ENCODE measurements at regions of chr20 and their contacts with region 1.

Region 1: DNA sequence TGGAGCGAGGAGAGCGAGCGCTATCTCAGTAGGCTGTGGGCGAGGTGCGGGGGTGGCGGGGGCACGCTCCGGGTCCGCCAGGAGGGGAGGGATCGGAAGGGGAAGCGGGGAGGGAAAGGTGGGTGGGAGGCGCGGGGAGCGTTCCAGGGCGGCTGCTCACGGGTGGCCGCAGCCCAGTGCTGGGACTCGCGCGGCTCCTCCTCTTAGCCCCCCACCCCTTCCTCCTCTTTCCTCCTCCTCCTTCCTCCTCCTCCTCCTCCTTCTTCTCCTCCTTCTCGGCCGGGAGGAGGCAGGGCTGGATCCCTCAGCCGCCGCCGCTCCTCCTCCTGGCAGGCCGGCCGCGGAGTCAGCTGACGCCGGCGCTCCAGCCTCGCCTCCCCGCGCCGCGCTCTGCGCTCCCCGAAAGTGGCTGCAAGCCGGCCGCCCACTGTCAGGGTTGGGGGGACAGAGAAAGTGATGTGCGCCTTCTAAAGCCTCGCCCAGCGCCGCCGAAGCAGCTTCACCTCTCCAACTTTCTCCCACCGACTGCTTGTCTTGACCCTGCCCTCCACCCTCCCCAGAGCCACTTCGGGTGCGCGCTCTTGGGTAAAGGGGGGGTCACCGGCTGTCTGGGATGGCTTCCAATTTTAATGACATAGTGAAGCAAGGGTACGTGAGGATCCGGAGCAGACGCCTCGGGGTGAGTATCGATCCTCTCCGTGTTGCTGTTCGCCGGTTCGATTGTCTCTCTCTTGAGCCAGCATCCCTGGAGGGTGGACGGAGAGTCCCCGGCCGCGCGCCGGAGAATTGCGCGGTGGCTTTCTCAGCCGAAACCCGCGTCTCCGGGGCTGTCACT is at the start of gene DOK5:
- DNase-seq: peak in 1 of 2 donors; percentile 74
- H3K4me3 ChIP-seq: peak within 1 kb of the TSS; percentile 48 to 85
- H3K27ac ChIP-seq: peak within 1 kb of the TSS; percentile 70 to 71
- H3K4me1 ChIP-seq: peaks cover 0 to 3% of the 10 kb centered on the region in 2 donors
- H3K27me3 ChIP-seq: no peaks in the 10 kb centered on the region
- CTCF ChIP-seq: no peak
- total RNA-seq, gene DOK5: not detected

Region 2: GRCh38 chr20:54207743-54208547 is 267.6 kb before region 1 on chr20 and contains the start of gene PFDN4:
- intact Hi-C with region 1: loop called (anchors 5 kb)
- DNase-seq: peak in 1 of 2 donors; percentile 87
- H3K4me3 ChIP-seq: peak within 1 kb of the TSS; percentile 88 to 94
- H3K27ac ChIP-seq: peak within 1 kb of the TSS; percentile 96 to 98
- H3K4me1 ChIP-seq: peaks cover 0 to 16% of the 10 kb centered on the region in 2 donors
- H3K27me3 ChIP-seq: no peaks in the 10 kb centered on the region
- CTCF ChIP-seq: peak; percentile 58 to 83 (median 82)
- total RNA-seq, gene PFDN4: 68.9 TPM

Region 3: DNA sequence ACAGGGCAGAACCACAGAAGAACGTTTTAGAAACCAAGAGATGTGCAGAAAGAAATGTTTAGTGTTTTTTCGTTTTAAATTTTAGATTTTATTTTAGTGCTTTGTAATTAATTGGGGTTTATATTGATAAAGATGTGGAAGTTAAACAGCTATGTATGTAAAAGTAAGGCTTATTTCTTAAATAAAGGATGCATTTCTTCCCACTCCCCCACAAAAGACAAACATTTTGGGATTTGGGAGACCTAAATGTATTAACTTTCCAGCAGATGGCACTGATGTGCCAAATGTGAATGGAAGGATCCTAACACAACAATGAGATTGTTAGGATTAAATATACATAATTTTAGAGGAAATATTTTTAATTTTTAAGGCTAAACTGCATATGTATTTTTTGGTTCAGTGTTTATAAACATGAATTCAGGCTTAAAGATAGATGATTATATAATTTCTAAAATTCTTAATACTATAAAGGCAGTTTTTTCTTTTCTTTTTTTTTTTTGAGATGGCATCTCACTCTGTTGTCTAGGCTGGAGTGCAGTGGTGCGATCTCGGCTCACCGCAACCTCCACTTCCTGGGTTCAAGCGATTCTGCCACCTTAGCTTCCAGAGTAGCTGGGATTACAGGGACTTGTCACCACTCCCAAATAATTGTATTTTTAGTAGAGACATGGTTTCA is 255.7 kb before region 1 on chr20:
- intact Hi-C with region 1: loop called (anchors 5 kb)
- DNase-seq: no peak
- H3K4me3 ChIP-seq: no peak overlapping the region
- H3K27ac ChIP-seq: no peak overlapping the region
- H3K4me1 ChIP-seq: peaks cover 0 to 21% of the 10 kb centered on the region in 2 donors
- H3K27me3 ChIP-seq: no peaks in the 10 kb centered on the region
- CTCF ChIP-seq: peak; percentile 18 to 63 (median 53)

Region 4: GRCh38 chr20:54345301-54345724 is 130.2 kb before region 1 on chr20:
- intact Hi-C with region 1: loop called (anchors 2 kb)
- DNase-seq: no peak
- H3K4me3 ChIP-seq: no peak overlapping the region
- H3K27ac ChIP-seq: peak overlapping the region; percentile 5 to 54
- H3K4me1 ChIP-seq: peaks cover 0 to 15% of the 10 kb centered on the region in 2 donors
- H3K27me3 ChIP-seq: no peaks in the 10 kb centered on the region
- CTCF ChIP-seq: no peak

Region 5: GRCh38 chr20:54549658-54550326 is 74.2 kb after region 1 on chr20:
- intact Hi-C with region 1: loop called (anchors 5 kb)
- DNase-seq: no peak
- H3K4me3 ChIP-seq: no peak overlapping the region
- H3K27ac ChIP-seq: no peak overlapping the region
- H3K4me1 ChIP-seq: no peaks in the 10 kb centered on the region
- H3K27me3 ChIP-seq: no peaks in the 10 kb centered on the region
- CTCF ChIP-seq: no peak

Region 6: GRCh38 chr20:54649511-54649962 is 174.0 kb after region 1 on chr20:
- intact Hi-C with region 1: loop called (anchors 5 kb)
- DNase-seq: peak in 1 of 2 donors; percentile 79
- H3K4me3 ChIP-seq: no peak overlapping the region
- H3K27ac ChIP-seq: no peak overlapping the region
- H3K4me1 ChIP-seq: no peaks in the 10 kb centered on the region
- H3K27me3 ChIP-seq: no peaks in the 10 kb centered on the region
- CTCF ChIP-seq: peak; percentile 37 to 70 (median 63)

Measured in ascending aorta (tissue), 2 donors.